ENCODE measurements at regions of chr2 and their contacts with region 1.

Region 1: DNA sequence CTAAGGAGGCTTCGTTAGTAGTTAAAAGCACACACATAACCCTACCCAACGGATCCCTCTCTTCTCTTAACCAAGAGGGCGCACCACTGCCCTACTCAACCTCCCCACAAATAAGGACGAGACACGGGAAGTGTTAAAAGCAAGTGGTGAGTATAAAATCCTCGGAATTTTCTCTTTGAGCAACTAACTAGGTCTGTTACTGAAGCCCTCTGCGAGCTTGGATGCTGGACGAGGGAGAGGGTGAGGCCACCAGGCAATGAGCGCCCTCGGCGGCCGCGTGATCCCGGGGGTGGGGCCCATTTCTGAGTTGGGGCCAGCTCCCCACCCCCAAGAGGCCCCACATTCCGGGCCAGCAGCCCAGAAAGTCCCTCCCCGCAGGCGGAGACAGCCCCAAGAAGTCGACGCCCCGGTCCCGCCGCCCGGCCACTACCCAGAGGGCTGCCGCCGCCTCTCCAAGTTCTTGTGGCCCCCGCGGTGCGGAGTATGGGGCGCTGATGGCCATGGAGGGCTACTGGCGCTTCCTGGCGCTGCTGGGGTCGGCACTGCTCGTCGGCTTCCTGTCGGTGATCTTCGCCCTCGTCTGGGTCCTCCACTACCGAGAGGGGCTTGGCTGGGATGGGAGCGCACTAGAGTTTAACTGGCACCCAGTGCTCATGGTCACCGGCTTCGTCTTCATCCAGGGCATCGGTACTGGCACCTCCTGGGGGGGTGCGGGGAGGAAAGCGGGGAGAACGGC is at the start of gene CYBRD1:
- DNase-seq: peak; percentile 88 to 91 (median 89)
- H3K4me3 ChIP-seq: peak within 1 kb of the TSS; percentile 98
- H3K27ac ChIP-seq: peak within 1 kb of the TSS; percentile 92 to 94
- H3K4me1 ChIP-seq: peaks cover 9% of the 10 kb centered on the region
- H3K27me3 ChIP-seq: no peaks in the 10 kb centered on the region
- CTCF ChIP-seq: peak in 1 of 3 donors; percentile 8
- EP300 ChIP-seq: no peak
- POLR2A ChIP-seq: peak; percentile 70
- total RNA-seq, gene CYBRD1: 158 to 245 (median 191) TPM

Region 2: GRCh38 chr2:171433763-171434670 is 88.2 kb before region 1 on chr2 and contains the starts of genes DCAF17 and METTL8:
- intact Hi-C with region 1: loop called in 2 of 4 experiments (anchors 2 to 10 kb)
- DNase-seq: peak; percentile 93 to 95 (median 94)
- H3K4me3 ChIP-seq: peak within 1 kb of the TSS; percentile 73
- H3K27ac ChIP-seq: peak within 1 kb of the TSS; percentile 92 to 95
- H3K4me1 ChIP-seq: no peaks in the 10 kb centered on the region
- H3K27me3 ChIP-seq: no peaks in the 10 kb centered on the region
- CTCF ChIP-seq: peak in 2 of 3 donors; percentile 1 to 7
- EP300 ChIP-seq: no peak
- POLR2A ChIP-seq: peak; percentile 35
- total RNA-seq, gene DCAF17: 12.3 to 20.2 (median 17.9) TPM
- total RNA-seq, gene METTL8: 10.8 to 33.0 (median 17.9) TPM